HEK293 (cell line): ENCODE measurements at regions of chr11 and their contacts with region 1.

Region 1: DNA sequence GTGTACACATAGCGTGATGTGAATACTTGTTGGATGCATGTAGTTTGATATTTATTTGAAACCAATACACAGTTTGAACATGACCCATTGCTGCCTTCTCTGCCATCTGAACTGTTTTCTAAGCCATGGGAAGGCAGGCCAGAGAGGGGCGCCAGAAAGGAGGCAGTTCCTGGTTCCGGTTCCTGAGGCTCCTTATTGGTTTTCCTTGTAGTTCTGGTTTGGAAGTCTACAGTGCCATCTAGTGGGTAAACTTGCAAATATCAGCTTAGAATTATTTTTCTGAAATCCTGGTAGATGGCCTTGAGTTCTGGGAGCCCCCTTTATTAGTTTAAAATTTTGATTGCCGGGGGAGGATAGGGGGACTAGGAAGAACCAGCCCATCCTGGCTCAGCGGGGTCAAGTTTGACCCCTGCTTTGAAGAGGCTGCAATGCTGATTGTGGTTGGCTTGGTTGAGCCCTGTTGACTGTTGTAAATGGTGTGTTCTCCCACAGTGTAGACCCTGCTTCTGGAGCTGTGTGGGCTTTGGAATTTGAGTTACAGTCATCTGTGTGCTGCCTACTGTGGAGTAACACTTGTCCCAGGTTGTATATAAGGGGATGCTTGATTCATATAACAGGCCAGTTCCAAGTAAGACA is 48.4 kb downstream of the GRAMD1B start:
- H3K4me3 ChIP-seq: no peak overlapping the region
- H3K27ac ChIP-seq: no peak overlapping the region
- H3K4me1 ChIP-seq: no peaks in the 10 kb centered on the region
- CTCF ChIP-seq: peak; percentile 30; the same call in 1 of the 2 replicates

Region 2: GRCh38 chr11:123301696-123302400 is 176.6 kb before region 1 on chr11:
- CTCF ChIA-PET with region 1: interaction called, 26 read pairs
- POLR2A ChIA-PET with region 1: no interaction called
- H3K4me3 ChIP-seq: peak overlapping the region; percentile 10
- H3K27ac ChIP-seq: no peak overlapping the region
- H3K4me1 ChIP-seq: no peaks in the 10 kb centered on the region
- CTCF ChIP-seq: peak; percentile 21; the same call in 1 of the 2 replicates

Region 3: GRCh38 chr11:123391646-123392348 is 86.7 kb before region 1 on chr11:
- CTCF ChIA-PET with region 1: interaction called, 10 read pairs
- POLR2A ChIA-PET with region 1: no interaction called
- H3K4me3 ChIP-seq: no peak overlapping the region
- H3K27ac ChIP-seq: no peak overlapping the region
- H3K4me1 ChIP-seq: no peaks in the 10 kb centered on the region
- CTCF ChIP-seq: no peak

Region 4: GRCh38 chr11:123429913-123430720 is 48.4 kb before region 1 on chr11 and contains the start of gene GRAMD1B:
- CTCF ChIA-PET with region 1: interaction called, 12 read pairs
- POLR2A ChIA-PET with region 1: no interaction called
- H3K4me3 ChIP-seq: peak within 1 kb of the TSS; percentile 72
- H3K27ac ChIP-seq: peak within 1 kb of the TSS; percentile 81
- H3K4me1 ChIP-seq: no peaks in the 10 kb centered on the region
- CTCF ChIP-seq: peak; percentile 73